HCT116 (cell line): ENCODE measurements at regions of chr10 and their contacts with region 1.

Region 1: DNA sequence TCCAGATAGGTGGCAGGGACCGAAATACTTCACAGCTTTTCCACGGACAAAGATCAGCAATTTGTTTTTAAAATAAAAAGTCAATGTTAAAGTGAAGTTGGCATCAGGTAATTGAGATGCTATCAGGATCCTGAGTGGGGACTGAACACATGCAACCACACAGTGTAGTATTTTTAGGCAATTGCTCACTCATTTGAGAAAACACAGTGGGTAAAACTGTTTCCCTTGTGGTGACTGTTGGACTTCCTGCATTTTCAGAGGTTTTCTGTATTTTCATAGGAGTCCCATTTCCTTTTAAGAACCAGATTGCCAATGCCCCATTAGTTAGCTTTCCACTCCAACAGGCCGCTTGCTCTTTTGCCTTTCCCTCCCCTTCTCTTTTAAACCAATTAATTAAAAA is 159.5 kb upstream of the ZNF32 start:
- DNase-seq: no peak
- ATAC-seq: no peak
- H3K4me3 ChIP-seq: no peak overlapping the region
- H3K27ac ChIP-seq: no peak overlapping the region
- H3K4me1 ChIP-seq: no peaks in the 10 kb centered on the region
- H3K27me3 ChIP-seq: peaks cover 34% of the 10 kb centered on the region
- CTCF ChIP-seq: no peak
- POLR2A ChIP-seq: no peak
- RAD21 ChIP-seq: no peak

Region 2: DNA sequence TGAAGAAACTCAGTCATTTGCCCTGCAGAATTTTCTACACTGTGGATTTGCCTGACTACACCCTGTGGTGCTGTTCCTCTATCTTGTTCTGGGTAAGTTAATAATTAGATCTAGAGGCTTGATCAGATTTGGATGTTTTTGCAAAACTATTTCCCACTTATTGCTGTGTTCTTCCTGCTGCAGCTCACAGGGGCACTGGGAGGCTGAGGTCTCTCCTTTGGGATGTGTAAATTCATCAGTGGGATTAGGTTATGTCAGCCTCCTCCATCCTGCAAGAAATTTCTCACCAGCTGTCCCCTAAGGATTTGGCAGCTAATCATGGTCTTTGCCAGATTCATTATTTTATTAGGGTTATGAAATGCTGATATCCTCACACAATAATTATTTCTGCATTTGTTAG is 11.4 kb before region 1 on chr10:
- CTCF ChIA-PET with region 1: no interaction called
- POLR2A ChIA-PET with region 1: no interaction called
- RAD21 ChIA-PET with region 1: no interaction called
- intact Hi-C with region 1: loop called (anchors 2 kb)
- DNase-seq: no peak
- ATAC-seq: no peak
- H3K4me3 ChIP-seq: no peak overlapping the region
- H3K27ac ChIP-seq: no peak overlapping the region
- H3K4me1 ChIP-seq: no peaks in the 10 kb centered on the region
- H3K27me3 ChIP-seq: peaks cover 59% of the 10 kb centered on the region
- CTCF ChIP-seq: no peak
- POLR2A ChIP-seq: no peak
- RAD21 ChIP-seq: no peak

Region 3: GRCh38 chr10:43857206-43857930 is 49.2 kb after region 1 on chr10:
- CTCF ChIA-PET with region 1: no interaction called
- POLR2A ChIA-PET with region 1: no interaction called
- RAD21 ChIA-PET with region 1: no interaction called
- intact Hi-C with region 1: loop called (anchors 5 kb)
- DNase-seq: no peak
- ATAC-seq: no peak
- H3K4me3 ChIP-seq: no peak overlapping the region
- H3K27ac ChIP-seq: no peak overlapping the region
- H3K4me1 ChIP-seq: peaks cover 8 to 14% of the 10 kb centered on the region in 2 experiments
- H3K27me3 ChIP-seq: peaks cover 3% of the 10 kb centered on the region; the same call in 1 of the 2 replicates
- CTCF ChIP-seq: no peak
- POLR2A ChIP-seq: no peak
- RAD21 ChIP-seq: no peak

Region 4: DNA sequence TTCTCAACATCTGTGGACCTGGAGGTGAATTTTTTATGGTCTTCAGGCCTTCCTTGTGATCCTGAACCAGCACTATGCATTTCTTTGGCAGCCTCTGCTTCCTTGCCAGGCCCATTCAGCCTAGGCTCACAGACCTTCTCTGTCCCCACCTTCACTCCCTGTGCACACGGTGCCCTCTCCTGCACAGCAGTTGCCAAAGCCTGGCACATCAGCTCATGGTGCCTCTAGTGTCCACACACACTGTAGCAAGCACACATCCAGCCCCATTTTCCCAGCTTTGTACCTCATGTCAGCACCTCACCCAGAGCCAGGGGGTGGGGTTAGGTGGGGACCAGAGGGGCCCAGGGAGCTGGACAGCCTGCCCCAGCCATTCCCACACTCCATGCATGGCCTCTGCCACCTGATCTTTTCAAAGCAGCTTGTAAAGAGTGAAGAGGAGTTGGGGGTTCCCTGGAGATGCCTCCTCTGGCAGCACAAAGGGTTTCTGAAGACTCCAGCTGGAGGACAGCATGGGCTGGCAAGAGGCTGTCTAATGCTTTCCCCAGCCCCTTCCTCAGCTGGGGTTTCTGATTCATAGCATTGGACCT is 1045.1 kb after region 1 on chr10:
- CTCF ChIA-PET with region 1: no interaction called
- POLR2A ChIA-PET with region 1: no interaction called
- RAD21 ChIA-PET with region 1: no interaction called
- intact Hi-C with region 1: no loop called
- DNase-seq: no peak
- ATAC-seq: peak; percentile 84
- H3K4me3 ChIP-seq: no peak overlapping the region
- H3K27ac ChIP-seq: no peak overlapping the region
- H3K4me1 ChIP-seq: no peaks in the 10 kb centered on the region
- H3K27me3 ChIP-seq: peaks cover 8% of the 10 kb centered on the region; the same call in 1 of the 2 replicates
- CTCF ChIP-seq: peak in 2 of 3 experiments; percentile 22 to 42; a peak in 3 of 6 replicates
- POLR2A ChIP-seq: no peak
- RAD21 ChIP-seq: peak; percentile 44